CD8-positive, alpha-beta memory T cell (primary cell): ENCODE measurements at regions of chr2 and their contacts with region 1.

Region 1: GRCh38 chr2:170973492-170974303 is 44.6 kb downstream of the GORASP2 start:
- DNase-seq: peak; percentile 82 to 92 (median 85)
- H3K4me3 ChIP-seq: peak overlapping the region; percentile 73
- H3K4me3 Mint-ChIP-seq: peak overlapping the region; percentile 79 to 91 (median 83)
- H3K27ac ChIP-seq: peak overlapping the region; percentile 63
- H3K27ac Mint-ChIP-seq: peak overlapping the region in 5 of 8 donors; percentile 23 to 85 (median 60)
- H3K4me1 ChIP-seq: peaks cover 5% of the 10 kb centered on the region
- H3K4me1 Mint-ChIP-seq: peaks cover 10 to 12% (median 11%) of the 10 kb centered on the region in 3 donors
- H3K27me3 ChIP-seq: no peaks in the 10 kb centered on the region
- H3K27me3 Mint-ChIP-seq: no peaks in the 10 kb centered on the region

Region 2: DNA sequence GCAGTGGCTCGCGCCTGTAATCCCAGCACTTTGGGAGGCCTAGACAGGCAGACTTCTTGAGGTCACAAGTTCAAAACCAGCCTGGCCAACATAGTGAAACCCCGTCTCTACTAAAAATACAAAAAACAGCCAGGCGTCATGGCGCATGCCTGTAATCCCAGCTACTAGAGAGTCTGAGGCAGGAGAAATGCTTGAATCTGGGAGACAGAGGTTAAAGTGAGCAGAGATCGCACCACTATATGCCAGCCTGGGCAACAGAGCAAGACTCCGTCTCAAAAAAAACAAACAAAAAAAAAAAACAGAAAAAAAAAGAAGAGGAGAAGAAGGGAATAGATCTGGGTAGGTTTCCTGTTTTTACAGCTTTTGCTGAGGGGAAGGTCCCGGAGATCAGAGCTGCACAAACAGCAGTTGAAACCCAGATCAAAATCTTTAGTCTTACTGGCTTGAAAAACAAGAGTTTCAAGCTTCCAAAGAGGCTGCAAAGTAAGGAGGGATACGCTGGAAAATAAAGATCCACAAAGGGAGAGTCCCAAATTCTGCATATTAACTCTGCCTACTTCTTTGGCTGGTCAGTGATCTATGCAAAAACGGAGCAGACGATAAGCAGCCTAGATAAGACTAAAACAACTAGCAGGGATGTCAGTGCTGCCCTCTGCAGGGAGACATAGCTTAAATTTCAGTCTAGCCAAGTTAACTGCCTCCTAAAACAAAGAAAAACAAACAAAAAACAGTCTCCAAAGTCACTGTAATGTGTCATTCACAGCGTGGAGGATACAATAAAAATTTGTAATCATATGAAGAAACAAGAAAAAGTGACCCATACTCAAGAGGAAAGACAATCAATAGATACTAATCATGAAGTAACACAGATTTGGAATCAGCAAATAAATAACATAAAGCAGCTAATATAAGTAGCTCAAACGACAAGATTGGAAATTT is 112.9 kb after region 1 on chr2:
- CTCF ChIA-PET with region 1: interaction called, 10 read pairs
- POLR2A ChIA-PET with region 1: no interaction called
- DNase-seq: peak in 4 of 5 donors; percentile 5 to 73 (median 38)
- H3K4me3 ChIP-seq: peak overlapping the region; percentile 40
- H3K4me3 Mint-ChIP-seq: peak overlapping the region in 6 of 7 donors; percentile 54 to 80 (median 64)
- H3K27ac ChIP-seq: no peak overlapping the region
- H3K27ac Mint-ChIP-seq: peak overlapping the region; percentile 24 to 86 (median 72)
- H3K4me1 ChIP-seq: peaks cover 59% of the 10 kb centered on the region
- H3K4me1 Mint-ChIP-seq: peaks cover 41 to 63% (median 59%) of the 10 kb centered on the region in 3 donors
- H3K27me3 ChIP-seq: no peaks in the 10 kb centered on the region
- H3K27me3 Mint-ChIP-seq: no peaks in the 10 kb centered on the region

Region 3: DNA sequence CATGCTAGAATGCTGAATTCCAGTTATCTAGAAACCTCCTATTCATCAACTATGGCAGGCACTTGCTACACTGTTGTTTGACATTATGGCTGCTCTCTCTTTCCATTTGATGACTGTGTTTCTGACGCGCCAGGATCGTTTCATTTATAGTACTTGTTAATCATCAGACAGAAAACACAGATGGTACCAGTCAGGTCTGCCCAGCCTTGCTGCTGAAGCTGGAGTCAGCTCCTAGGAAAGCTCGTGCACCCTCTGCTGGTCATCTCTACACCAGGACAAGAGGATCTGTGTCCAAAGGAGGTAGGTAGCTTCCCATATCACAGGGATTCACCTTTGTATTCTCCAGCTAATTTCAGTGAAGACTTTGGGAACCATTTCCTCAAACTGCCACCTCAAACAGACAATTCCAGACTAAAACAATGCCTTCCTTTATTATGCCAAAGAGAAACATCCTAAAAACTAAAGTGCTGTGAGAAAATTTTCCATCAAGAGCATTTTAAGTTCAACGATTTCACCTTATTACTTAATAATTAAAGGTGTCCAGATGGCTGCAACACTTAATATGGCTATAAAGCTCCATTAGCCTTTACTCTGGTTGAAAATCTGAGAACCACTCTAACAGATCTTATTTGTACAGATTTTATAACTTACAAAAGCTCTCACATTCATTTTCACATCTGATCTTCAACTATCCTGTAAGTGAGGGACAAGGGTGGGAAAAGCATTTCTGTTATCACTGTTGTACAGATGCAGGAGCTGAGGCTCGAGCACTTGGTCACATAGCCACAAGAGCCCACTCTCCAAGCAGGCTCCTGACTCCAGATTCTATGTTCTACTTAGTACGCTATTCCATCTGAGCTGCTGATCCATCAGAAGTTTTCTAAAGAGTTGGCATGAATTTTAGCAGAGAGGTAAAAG is 442.6 kb after region 1 on chr2:
- CTCF ChIA-PET with region 1: interaction called, 34 read pairs
- POLR2A ChIA-PET with region 1: interaction called, 4 read pairs
- DNase-seq: peak; percentile 49 to 84 (median 62)
- H3K4me3 ChIP-seq: no peak overlapping the region
- H3K4me3 Mint-ChIP-seq: peak overlapping the region in 3 of 7 donors; percentile 3 to 12 (median 3)
- H3K27ac ChIP-seq: no peak overlapping the region
- H3K27ac Mint-ChIP-seq: peak overlapping the region in 3 of 8 donors; percentile 17 to 83 (median 27)
- H3K4me1 ChIP-seq: peaks cover 4% of the 10 kb centered on the region
- H3K4me1 Mint-ChIP-seq: peaks cover 7 to 19% (median 14%) of the 10 kb centered on the region in 3 donors
- H3K27me3 ChIP-seq: no peaks in the 10 kb centered on the region
- H3K27me3 Mint-ChIP-seq: no peaks in the 10 kb centered on the region